ENCODE measurements at regions of chrX and their contacts with region 1.

Region 1: GRCh38 chrX:134171661-134172587 is 65.1 kb upstream of the CCDC160 start:
- DNase-seq: peak in 3 of 5 donors; percentile 18 to 29 (median 23)
- H3K4me3 ChIP-seq: peak overlapping the region in 1 of 2 donors; percentile 58
- H3K4me3 Mint-ChIP-seq: peak overlapping the region; percentile 79 to 94 (median 91)
- H3K27ac ChIP-seq: no peak overlapping the region
- H3K27ac Mint-ChIP-seq: peak overlapping the region in 2 of 7 donors; percentile 31 to 68
- H3K4me1 ChIP-seq: peaks cover 9% of the 10 kb centered on the region
- H3K4me1 Mint-ChIP-seq: peaks cover 6 to 20% (median 14%) of the 10 kb centered on the region in 4 donors
- H3K27me3 ChIP-seq: no peaks in the 10 kb centered on the region
- H3K27me3 Mint-ChIP-seq: peaks cover 3 to 4% of the 10 kb centered on the region in 2 donors

Region 2: GRCh38 chrX:133999031-133999705 is 172.8 kb before region 1 on chrX:
- CTCF ChIA-PET with region 1: no interaction called
- POLR2A ChIA-PET with region 1: no interaction called
- intact Hi-C with region 1: no loop called
- DNase-seq: no peak
- H3K4me3 ChIP-seq: no peak overlapping the region
- H3K4me3 Mint-ChIP-seq: no peak overlapping the region
- H3K27ac ChIP-seq: no peak overlapping the region
- H3K27ac Mint-ChIP-seq: no peak overlapping the region
- H3K4me1 ChIP-seq: no peaks in the 10 kb centered on the region
- H3K4me1 Mint-ChIP-seq: no peaks in the 10 kb centered on the region
- H3K27me3 ChIP-seq: no peaks in the 10 kb centered on the region
- H3K27me3 Mint-ChIP-seq: peaks cover 2 to 3% of the 10 kb centered on the region in 2 donors

Region 3: GRCh38 chrX:134186362-134187121 is 14.6 kb after region 1 on chrX:
- CTCF ChIA-PET with region 1: no interaction called
- POLR2A ChIA-PET with region 1: interaction called, 3 read pairs
- intact Hi-C with region 1: loop called (anchors 2 kb)
- DNase-seq: peak; percentile 71 to 84 (median 76)
- H3K4me3 ChIP-seq: peak overlapping the region in 1 of 2 donors; percentile 19
- H3K4me3 Mint-ChIP-seq: peak overlapping the region in 7 of 8 donors; percentile 14 to 78 (median 76)
- H3K27ac ChIP-seq: no peak overlapping the region
- H3K27ac Mint-ChIP-seq: peak overlapping the region in 2 of 7 donors; percentile 44 to 64
- H3K4me1 ChIP-seq: peaks cover 31% of the 10 kb centered on the region
- H3K4me1 Mint-ChIP-seq: peaks cover 13 to 26% (median 24%) of the 10 kb centered on the region in 4 donors
- H3K27me3 ChIP-seq: no peaks in the 10 kb centered on the region
- H3K27me3 Mint-ChIP-seq: peaks cover 0 to 3% of the 10 kb centered on the region in 2 donors

Region 4: GRCh38 chrX:134206221-134206620 is 34.3 kb after region 1 on chrX:
- CTCF ChIA-PET with region 1: no interaction called
- POLR2A ChIA-PET with region 1: no interaction called
- intact Hi-C with region 1: no loop called
- DNase-seq: no peak
- H3K4me3 ChIP-seq: no peak overlapping the region
- H3K4me3 Mint-ChIP-seq: no peak overlapping the region
- H3K27ac ChIP-seq: no peak overlapping the region
- H3K27ac Mint-ChIP-seq: no peak overlapping the region
- H3K4me1 ChIP-seq: no peaks in the 10 kb centered on the region
- H3K4me1 Mint-ChIP-seq: no peaks in the 10 kb centered on the region
- H3K27me3 ChIP-seq: no peaks in the 10 kb centered on the region
- H3K27me3 Mint-ChIP-seq: peaks cover 2% of the 10 kb centered on the region in 2 donors

Region 5: GRCh38 chrX:134324359-134324758 is 152.4 kb after region 1 on chrX:
- CTCF ChIA-PET with region 1: no interaction called
- POLR2A ChIA-PET with region 1: no interaction called
- intact Hi-C with region 1: no loop called
- DNase-seq: no peak
- H3K4me3 ChIP-seq: no peak overlapping the region
- H3K4me3 Mint-ChIP-seq: no peak overlapping the region
- H3K27ac ChIP-seq: no peak overlapping the region
- H3K27ac Mint-ChIP-seq: no peak overlapping the region
- H3K4me1 ChIP-seq: no peaks in the 10 kb centered on the region
- H3K4me1 Mint-ChIP-seq: no peaks in the 10 kb centered on the region
- H3K27me3 ChIP-seq: no peaks in the 10 kb centered on the region
- H3K27me3 Mint-ChIP-seq: peaks cover 0 to 2% of the 10 kb centered on the region in 2 donors

Region 6: DNA sequence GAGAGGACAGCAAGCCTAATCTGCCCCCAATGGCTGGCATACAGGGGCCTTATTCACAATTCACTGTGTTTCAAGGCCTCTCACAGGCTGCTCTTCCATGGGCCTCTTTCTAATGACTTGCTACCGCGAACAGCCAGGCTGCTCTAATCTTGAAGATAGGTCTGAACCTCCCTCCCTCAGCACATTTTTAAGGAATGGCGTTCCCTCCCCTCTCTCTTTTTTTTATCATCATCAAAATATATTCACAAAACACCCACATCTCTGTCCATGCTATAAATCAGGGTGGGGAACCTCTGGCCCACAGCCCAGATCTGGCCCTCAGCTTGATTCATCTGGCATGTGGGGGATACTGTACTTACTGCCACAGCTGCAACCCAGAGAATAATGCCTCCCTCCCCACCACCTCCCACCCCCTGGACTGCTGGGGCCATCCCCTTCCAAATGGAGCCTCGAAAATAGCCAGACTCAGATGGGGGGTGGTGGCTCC is 562.6 kb after region 1 on chrX:
- CTCF ChIA-PET with region 1: no interaction called
- POLR2A ChIA-PET with region 1: no interaction called
- intact Hi-C with region 1: no loop called
- DNase-seq: no peak
- H3K4me3 ChIP-seq: no peak overlapping the region
- H3K4me3 Mint-ChIP-seq: peak overlapping the region in 1 of 8 donors; percentile 5
- H3K27ac ChIP-seq: no peak overlapping the region
- H3K27ac Mint-ChIP-seq: no peak overlapping the region
- H3K4me1 ChIP-seq: no peaks in the 10 kb centered on the region
- H3K4me1 Mint-ChIP-seq: no peaks in the 10 kb centered on the region
- H3K27me3 ChIP-seq: no peaks in the 10 kb centered on the region
- H3K27me3 Mint-ChIP-seq: no peaks in the 10 kb centered on the region